ENCODE measurements at regions of chr17 and their contacts with region 1.

Region 1: GRCh38 chr17:7915611-7916382 is at the start of gene RNF227:
- DNase-seq: peak; percentile 96
- ATAC-seq: peak; percentile 91
- total RNA-seq, gene RNF227: 0.70 TPM

Region 2: DNA sequence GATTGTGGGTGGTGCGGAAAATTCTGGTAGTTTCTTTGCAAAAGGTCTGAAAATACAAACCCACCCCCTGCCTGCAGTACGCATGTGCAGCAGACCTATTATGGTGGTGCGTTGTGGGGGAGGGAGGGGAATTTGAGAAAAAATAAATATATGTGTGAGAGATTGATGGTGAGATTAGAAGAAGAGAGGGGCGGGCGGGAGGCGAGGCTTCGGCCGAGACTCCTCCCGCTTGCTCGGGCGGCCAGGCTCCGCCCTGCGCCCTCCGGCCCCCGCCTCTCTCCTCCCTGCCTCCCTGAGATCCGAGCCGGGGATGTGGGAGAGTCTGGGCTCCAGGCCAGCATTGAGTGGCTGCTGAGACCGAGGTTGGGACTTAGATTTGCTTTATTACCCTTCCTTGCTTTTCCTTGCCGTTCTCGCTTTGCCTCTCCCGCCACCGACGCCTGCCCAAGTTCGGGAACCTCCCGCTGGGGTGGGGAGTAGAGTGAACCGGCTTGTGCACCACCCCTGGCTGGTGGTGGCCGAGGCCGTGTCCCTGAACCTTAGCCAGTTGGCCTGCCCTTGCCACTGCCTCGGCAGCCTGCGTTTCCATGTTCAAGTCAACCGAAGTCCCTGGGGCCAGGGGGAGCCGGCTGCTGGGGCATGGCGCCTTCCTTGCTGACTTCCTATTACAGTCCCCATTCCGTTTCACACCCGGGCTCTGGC is 28.2 kb before region 1 on chr17:
- intact Hi-C with region 1: loop called (anchors 2 kb)
- DNase-seq: peak; percentile 94
- ATAC-seq: peak; percentile 88

Region 3: GRCh38 chr17:8057691-8058114 is 141.9 kb after region 1 on chr17:
- intact Hi-C with region 1: loop called (anchors 5 kb)
- DNase-seq: no peak
- ATAC-seq: peak; percentile 88

Measured in Right ventricle myocardium inferior (tissue), 1 donor.